AG04450 (cell line): ENCODE measurements at regions of chr9 and their contacts with region 1.

Region 1: GRCh38 chr9:71285191-71285656 is 163.8 kb upstream of the TRPM3 start:
- DNase-seq: peak; percentile 33
- H3K4me3 ChIP-seq: no peak overlapping the region
- H3K27ac ChIP-seq: no peak overlapping the region
- H3K27me3 ChIP-seq: no peaks in the 10 kb centered on the region
- CTCF ChIP-seq: peak; percentile 92

Region 2: GRCh38 chr9:70805949-70806348 is 479.3 kb before region 1 on chr9:
- CTCF ChIA-PET with region 1: no interaction called
- POLR2A ChIA-PET with region 1: no interaction called
- DNase-seq: no peak
- H3K4me3 ChIP-seq: no peak overlapping the region
- H3K27ac ChIP-seq: no peak overlapping the region
- H3K27me3 ChIP-seq: peaks cover 2% of the 10 kb centered on the region
- CTCF ChIP-seq: no peak

Region 3: GRCh38 chr9:71249729-71250317 is 35.4 kb before region 1 on chr9:
- CTCF ChIA-PET with region 1: interaction called, 10 read pairs
- POLR2A ChIA-PET with region 1: no interaction called
- DNase-seq: peak; percentile 30
- H3K4me3 ChIP-seq: no peak overlapping the region
- H3K27ac ChIP-seq: no peak overlapping the region
- H3K27me3 ChIP-seq: no peaks in the 10 kb centered on the region
- CTCF ChIP-seq: peak; percentile 81

Region 4: GRCh38 chr9:71270554-71270953 is 14.7 kb before region 1 on chr9:
- CTCF ChIA-PET with region 1: interaction called, 12 read pairs
- POLR2A ChIA-PET with region 1: no interaction called
- DNase-seq: no peak
- H3K4me3 ChIP-seq: no peak overlapping the region
- H3K27ac ChIP-seq: no peak overlapping the region
- H3K27me3 ChIP-seq: no peaks in the 10 kb centered on the region
- CTCF ChIP-seq: no peak

Region 5: GRCh38 chr9:71295928-71296327 is 10.7 kb after region 1 on chr9:
- CTCF ChIA-PET with region 1: interaction called, 24 read pairs
- POLR2A ChIA-PET with region 1: no interaction called
- DNase-seq: no peak
- H3K4me3 ChIP-seq: no peak overlapping the region
- H3K27ac ChIP-seq: no peak overlapping the region
- H3K27me3 ChIP-seq: no peaks in the 10 kb centered on the region
- CTCF ChIP-seq: no peak

Region 6: GRCh38 chr9:71302776-71303175 is 17.6 kb after region 1 on chr9:
- CTCF ChIA-PET with region 1: interaction called, 27 read pairs
- POLR2A ChIA-PET with region 1: no interaction called
- DNase-seq: no peak
- H3K4me3 ChIP-seq: no peak overlapping the region
- H3K27ac ChIP-seq: no peak overlapping the region
- H3K27me3 ChIP-seq: no peaks in the 10 kb centered on the region
- CTCF ChIP-seq: no peak

Region 7: GRCh38 chr9:71506821-71507220 is 221.6 kb after region 1 on chr9:
- CTCF ChIA-PET with region 1: no interaction called
- POLR2A ChIA-PET with region 1: no interaction called
- DNase-seq: no peak
- H3K4me3 ChIP-seq: no peak overlapping the region
- H3K27ac ChIP-seq: no peak overlapping the region
- H3K27me3 ChIP-seq: no peaks in the 10 kb centered on the region
- CTCF ChIP-seq: no peak